ENCODE measurements at regions of chr12 and their contacts with region 1.

Region 1: GRCh38 chr12:50074936-50075807 is 10.0 kb upstream of the SMARCD1 start:
- DNase-seq: peak; percentile 82
- ATAC-seq: peak; percentile 93
- H3K4me3 ChIP-seq: peak overlapping the region; percentile 15 to 63 (median 38); a peak in 5 of 6 replicates
- H3K27ac ChIP-seq: peak overlapping the region; percentile 61
- H3K4me1 ChIP-seq: peaks cover 48% of the 10 kb centered on the region
- H3K27me3 ChIP-seq: peaks cover 1 to 7% of the 10 kb centered on the region in 2 experiments; a peak in 3 of 5 replicates
- CTCF ChIP-seq: peak; percentile 100
- EP300 ChIP-seq: no peak
- POLR2A ChIP-seq: peak in 1 of 2 experiments; percentile 28; a peak in 1 of 4 replicates
- RAD21 ChIP-seq: peak; percentile 99

Region 2: GRCh38 chr12:50038336-50038735 is 36.8 kb before region 1 on chr12:
- CTCF ChIA-PET with region 1: interaction called, 18 read pairs
- POLR2A ChIA-PET with region 1: interaction called, 5 read pairs
- in situ Hi-C with region 1: no loop called
- intact Hi-C with region 1: loop called (anchors 1 kb)
- DNase-seq: no peak
- ATAC-seq: no peak
- H3K4me3 ChIP-seq: no peak overlapping the region
- H3K27ac ChIP-seq: no peak overlapping the region
- H3K4me1 ChIP-seq: peaks cover 27% of the 10 kb centered on the region
- H3K27me3 ChIP-seq: peaks cover 4 to 16% of the 10 kb centered on the region in 2 experiments; a peak in 3 of 5 replicates
- CTCF ChIP-seq: no peak
- EP300 ChIP-seq: no peak
- POLR2A ChIP-seq: no peak
- RAD21 ChIP-seq: no peak

Region 3: DNA sequence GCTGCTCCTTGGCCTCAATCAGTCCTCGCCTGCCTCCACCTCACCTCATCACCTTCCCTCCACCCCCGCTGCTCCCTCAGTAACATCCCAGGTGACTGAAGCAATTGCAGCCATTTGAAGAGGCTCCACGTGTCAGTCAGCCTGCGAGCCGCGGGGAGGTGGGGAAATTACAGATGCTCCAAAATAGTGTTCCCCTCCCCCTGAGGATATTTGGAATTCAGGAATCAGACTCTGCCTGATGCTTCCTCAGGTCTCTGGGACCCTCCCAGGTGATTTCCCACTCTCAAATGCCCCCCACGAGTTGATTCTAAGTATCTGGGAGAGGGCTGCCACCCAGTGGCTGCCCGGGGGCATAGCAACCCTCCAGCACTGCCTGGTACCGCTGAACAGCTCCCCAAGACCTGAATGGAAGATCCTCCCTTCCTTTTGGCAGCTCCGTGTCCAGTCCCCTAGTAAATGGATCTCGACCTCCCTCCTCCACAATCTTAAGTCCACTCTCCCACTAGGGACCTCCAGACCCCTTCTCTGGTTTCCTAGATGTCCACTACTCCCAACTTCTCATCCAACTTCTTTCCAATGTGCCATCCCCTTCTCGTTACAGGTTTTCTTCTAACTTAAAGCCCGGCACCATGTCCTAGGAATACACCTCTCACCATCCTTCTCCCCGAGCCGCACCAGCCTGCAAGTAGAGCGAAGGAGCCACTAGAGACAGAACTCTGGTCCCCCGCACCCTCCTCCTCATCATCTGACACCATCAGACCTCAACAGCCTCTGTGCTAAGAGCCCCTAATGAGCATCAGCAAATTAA is 19.1 kb before region 1 on chr12:
- CTCF ChIA-PET with region 1: no interaction called
- POLR2A ChIA-PET with region 1: no interaction called
- in situ Hi-C with region 1: no loop called
- intact Hi-C with region 1: no loop called
- DNase-seq: peak; percentile 30
- ATAC-seq: peak; percentile 61
- H3K4me3 ChIP-seq: peak overlapping the region in 1 of 3 experiments; percentile 46; a peak in 2 of 6 replicates
- H3K27ac ChIP-seq: no peak overlapping the region
- H3K4me1 ChIP-seq: peaks cover 34% of the 10 kb centered on the region
- H3K27me3 ChIP-seq: peaks cover 9 to 59% of the 10 kb centered on the region in 2 experiments; a peak in 4 of 5 replicates
- CTCF ChIP-seq: peak; percentile 91
- EP300 ChIP-seq: no peak
- POLR2A ChIP-seq: no peak
- RAD21 ChIP-seq: peak; percentile 86

Region 4: DNA sequence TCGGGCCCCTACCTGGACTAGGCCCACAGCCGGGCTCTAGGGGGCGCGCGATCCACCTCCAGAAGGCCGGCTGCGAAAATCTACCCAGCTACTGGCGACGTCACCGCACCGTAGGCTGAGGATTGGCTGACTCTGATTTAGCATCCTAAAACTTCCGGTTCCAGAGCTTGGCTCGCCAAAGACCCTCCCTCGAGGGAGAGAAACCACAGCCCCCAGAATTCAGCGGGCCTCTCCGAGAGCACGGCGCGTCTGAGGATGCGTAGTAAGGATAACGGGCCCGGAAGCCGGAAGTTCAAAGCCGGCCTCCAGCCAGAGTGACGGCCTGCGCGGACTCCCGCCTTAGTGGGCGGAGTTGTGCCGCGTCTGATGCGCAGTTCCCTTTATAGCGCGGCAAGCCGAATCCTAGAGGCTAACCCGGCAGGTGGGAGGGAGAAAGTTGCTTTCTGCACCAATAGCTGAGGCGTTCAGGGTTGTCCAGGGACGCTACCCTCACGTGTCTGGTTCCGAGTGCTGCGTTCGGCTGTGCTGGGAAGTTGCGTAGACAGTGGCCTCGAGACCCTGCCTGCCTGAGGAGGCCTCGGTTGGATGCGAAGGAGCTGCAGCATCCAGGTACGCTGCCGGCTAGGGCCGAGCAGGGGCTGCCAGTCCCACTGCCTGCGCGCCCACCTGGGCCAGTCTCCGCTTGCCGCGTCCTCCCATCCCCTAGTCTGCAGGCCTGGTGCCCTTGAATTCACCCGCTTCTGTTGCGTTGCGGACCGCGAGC is 36.7 kb after region 1 on chr12 and contains the start of gene COX14:
- CTCF ChIA-PET with region 1: interaction called, 7 read pairs
- POLR2A ChIA-PET with region 1: interaction called, 21 read pairs
- in situ Hi-C with region 1: no loop called
- intact Hi-C with region 1: loop called (anchors 1 kb)
- DNase-seq: peak; percentile 99
- ATAC-seq: peak; percentile 82
- H3K4me3 ChIP-seq: peak within 1 kb of the TSS; percentile 90 to 94 (median 92)
- H3K27ac ChIP-seq: peak within 1 kb of the TSS; percentile 95
- H3K4me1 ChIP-seq: peaks cover 56% of the 10 kb centered on the region
- H3K27me3 ChIP-seq: no peaks in the 10 kb centered on the region; a peak in 1 of 5 replicates
- CTCF ChIP-seq: peak; percentile 97
- EP300 ChIP-seq: peak in 1 of 2 experiments; percentile 21; a peak in 1 of 4 replicates
- POLR2A ChIP-seq: peak in 1 of 2 experiments; percentile 97; a peak in 2 of 4 replicates
- RAD21 ChIP-seq: peak; percentile 50
- total RNA-seq, gene COX14: 71.6 and 82.0 TPM in 2 replicates

Region 5: DNA sequence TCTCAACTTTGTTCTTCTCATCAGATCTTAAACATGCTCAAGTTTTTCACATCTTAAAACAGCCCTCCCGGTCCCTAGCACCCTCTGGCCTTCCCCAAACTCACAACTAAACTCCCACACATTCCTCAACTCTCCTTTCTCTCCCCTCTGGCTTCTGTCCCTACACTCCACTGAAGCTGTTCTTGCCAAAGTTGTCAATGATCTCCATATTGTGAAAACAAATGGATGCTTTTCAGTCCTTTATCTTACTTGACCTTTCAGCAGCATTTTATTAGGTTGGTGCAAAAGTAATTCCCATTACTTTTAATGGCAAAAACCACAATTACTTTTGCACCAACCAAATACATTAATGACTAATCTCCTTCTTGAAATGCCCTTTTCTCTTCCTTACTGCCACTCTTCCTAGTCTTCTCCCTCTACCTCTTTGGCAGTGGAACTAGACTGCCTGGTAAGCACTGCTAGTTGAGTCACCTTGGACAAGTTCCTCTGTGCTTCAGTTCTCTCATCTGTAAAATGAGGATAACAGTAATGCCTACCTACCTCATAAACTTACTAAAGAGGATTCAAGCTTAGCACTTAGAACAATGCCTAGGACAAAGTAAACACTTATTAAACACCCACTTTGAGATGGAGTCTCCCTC is 76.0 kb after region 1 on chr12:
- CTCF ChIA-PET with region 1: no interaction called
- POLR2A ChIA-PET with region 1: no interaction called
- in situ Hi-C with region 1: no loop called
- intact Hi-C with region 1: no loop called
- DNase-seq: no peak
- ATAC-seq: no peak
- H3K4me3 ChIP-seq: no peak overlapping the region
- H3K27ac ChIP-seq: no peak overlapping the region
- H3K4me1 ChIP-seq: no peaks in the 10 kb centered on the region
- H3K27me3 ChIP-seq: no peaks in the 10 kb centered on the region
- CTCF ChIP-seq: no peak
- EP300 ChIP-seq: no peak
- POLR2A ChIP-seq: no peak
- RAD21 ChIP-seq: no peak

Region 6: DNA sequence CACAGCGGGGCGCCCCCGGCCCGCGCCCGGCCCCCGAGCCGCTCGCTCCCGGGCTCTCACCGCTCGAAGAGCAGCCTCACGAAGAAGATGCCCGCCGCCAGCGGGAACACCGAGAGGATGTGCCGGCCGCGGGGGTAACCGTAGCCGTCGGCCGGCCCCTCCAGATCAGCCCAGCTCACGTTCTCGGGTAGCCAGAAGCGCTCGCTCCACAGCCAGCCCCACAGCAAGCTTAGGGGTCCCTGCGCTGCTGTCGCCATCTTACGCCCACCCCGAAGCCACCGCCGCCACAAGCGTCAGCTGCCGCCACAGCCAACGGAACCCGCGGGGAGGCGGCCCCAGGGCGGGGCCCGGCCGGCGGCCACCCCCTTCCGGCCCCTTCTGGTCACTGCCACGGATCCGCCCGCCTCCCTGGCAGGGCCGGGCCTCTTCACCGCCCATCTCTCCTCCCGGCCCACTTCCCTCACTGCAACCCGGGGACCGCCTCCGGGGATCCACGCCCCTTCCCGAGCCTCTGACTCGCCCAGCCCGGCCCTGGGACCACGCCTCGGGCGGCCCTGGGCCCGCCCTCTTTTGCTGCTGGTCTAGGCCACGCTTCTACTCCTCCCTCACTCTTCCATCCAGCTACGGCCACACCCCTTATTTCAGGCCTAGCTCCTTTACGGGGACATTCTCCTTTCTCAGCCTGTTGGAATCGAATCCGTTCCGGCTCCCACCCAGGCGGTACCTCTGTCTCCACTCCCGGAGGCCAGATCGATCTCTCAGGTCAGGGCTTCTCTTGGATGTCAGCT is 92.1 kb after region 1 on chr12 and contains the start of gene CERS5:
- CTCF ChIA-PET with region 1: interaction called, 4 read pairs
- POLR2A ChIA-PET with region 1: interaction called, 3 read pairs
- in situ Hi-C with region 1: no loop called
- intact Hi-C with region 1: loop called (anchors 2 kb)
- DNase-seq: peak; percentile 96
- ATAC-seq: peak; percentile 98
- H3K4me3 ChIP-seq: peak within 1 kb of the TSS; percentile 80 to 98 (median 93)
- H3K27ac ChIP-seq: peak within 1 kb of the TSS; percentile 90
- H3K4me1 ChIP-seq: peaks cover 51% of the 10 kb centered on the region
- H3K27me3 ChIP-seq: no peaks in the 10 kb centered on the region; a peak in 1 of 5 replicates
- CTCF ChIP-seq: no peak; the same call in none of the 2 replicates
- EP300 ChIP-seq: 0 out of 4 replicates have a peak, but pooled peaks of 1 of the 2 experiments have one; percentile 3
- POLR2A ChIP-seq: peak; percentile 71 to 87
- RAD21 ChIP-seq: peak; percentile 67
- total RNA-seq, gene CERS5: 15.3 and 22.3 TPM in 2 replicates

Region 7: GRCh38 chr12:50362671-50363070 is 287.5 kb after region 1 on chr12:
- CTCF ChIA-PET with region 1: no interaction called
- POLR2A ChIA-PET with region 1: no interaction called
- in situ Hi-C with region 1: no loop called
- intact Hi-C with region 1: no loop called
- DNase-seq: no peak
- ATAC-seq: no peak
- H3K4me3 ChIP-seq: no peak overlapping the region
- H3K27ac ChIP-seq: no peak overlapping the region
- H3K4me1 ChIP-seq: no peaks in the 10 kb centered on the region
- H3K27me3 ChIP-seq: no peaks in the 10 kb centered on the region
- CTCF ChIP-seq: no peak
- EP300 ChIP-seq: no peak
- POLR2A ChIP-seq: no peak
- RAD21 ChIP-seq: no peak

Measured in HepG2 (cell line).